ENCODE measurements at regions of chr5 and their contacts with region 1.

Region 1: GRCh38 chr5:157431544-157432200 is 28.3 kb upstream of the NIPAL4 start:
- DNase-seq: peak; percentile 26
- H3K4me3 Mint-ChIP-seq: no peak overlapping the region
- H3K27ac Mint-ChIP-seq: no peak overlapping the region
- H3K4me1 Mint-ChIP-seq: peaks cover 7% of the 10 kb centered on the region
- H3K27me3 Mint-ChIP-seq: peaks cover 13% of the 10 kb centered on the region

Region 2: DNA sequence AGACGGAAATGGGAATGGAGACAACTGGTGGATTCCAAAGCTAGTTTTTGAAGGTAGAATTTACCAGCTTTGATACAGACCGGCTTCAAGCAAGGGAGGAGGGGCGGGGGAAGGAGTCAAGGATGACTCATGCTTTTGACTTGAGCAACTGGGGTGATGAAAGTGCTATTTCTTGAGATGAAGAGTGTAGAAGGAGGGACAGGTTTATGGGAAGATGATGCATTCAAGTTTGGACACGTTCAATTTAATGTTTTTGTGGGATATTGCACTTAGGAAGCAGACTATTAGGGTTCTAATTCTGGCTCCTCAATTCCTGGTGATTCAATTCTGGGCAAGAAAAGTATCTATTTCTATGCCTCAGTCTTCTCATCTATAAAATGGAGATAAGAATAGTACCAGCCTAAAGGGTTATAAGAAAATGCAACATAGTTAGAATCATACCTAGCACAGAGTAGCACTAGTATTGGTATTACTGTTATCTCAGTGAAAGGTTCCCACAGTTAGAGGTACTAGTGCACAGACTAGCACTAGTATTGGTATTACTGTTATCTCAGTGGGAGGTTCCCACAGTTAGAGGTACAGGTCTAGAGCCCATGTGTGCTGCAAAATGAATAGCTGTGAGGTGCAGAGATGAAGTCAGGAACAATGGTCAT is 33.0 kb after region 1 on chr5:
- CTCF ChIA-PET with region 1: interaction called, 13 read pairs
- POLR2A ChIA-PET with region 1: no interaction called
- DNase-seq: peak; percentile 67
- H3K4me3 Mint-ChIP-seq: no peak overlapping the region
- H3K27ac Mint-ChIP-seq: peak overlapping the region; percentile 57
- H3K4me1 Mint-ChIP-seq: peaks cover 41% of the 10 kb centered on the region
- H3K27me3 Mint-ChIP-seq: peaks cover 16% of the 10 kb centered on the region

Region 3: DNA sequence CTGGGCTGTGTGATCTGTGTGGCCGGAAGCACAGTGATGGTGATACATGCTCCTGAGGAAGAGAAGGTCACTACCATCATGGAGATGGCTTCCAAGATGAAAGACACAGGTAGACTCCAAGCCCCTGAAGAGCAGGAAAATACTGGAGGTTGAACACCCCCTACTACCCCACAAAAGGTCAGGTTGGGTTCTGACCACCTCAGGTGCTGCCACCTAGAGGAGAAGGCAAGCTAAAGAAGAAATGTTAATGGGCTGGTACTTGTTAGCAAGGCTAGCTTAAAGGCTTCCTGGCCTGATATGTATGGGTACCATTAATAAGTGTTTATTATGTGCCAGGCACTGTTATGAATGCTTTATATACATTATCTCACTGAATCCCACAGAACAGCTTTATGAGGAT is 40.0 kb after region 1 on chr5:
- CTCF ChIA-PET with region 1: interaction called, 33 read pairs
- POLR2A ChIA-PET with region 1: no interaction called
- DNase-seq: no peak
- H3K4me3 Mint-ChIP-seq: no peak overlapping the region
- H3K27ac Mint-ChIP-seq: no peak overlapping the region
- H3K4me1 Mint-ChIP-seq: peaks cover 4% of the 10 kb centered on the region
- H3K27me3 Mint-ChIP-seq: no peaks in the 10 kb centered on the region

Measured in activated CD4-positive, alpha-beta memory T cell treated with anti-CD3 and anti-CD28 coated beads, Interleukin-2, amount 10 ng/mL, durations not matched to agents 7 days and 5 days (primary cell).